ENCODE measurements at regions of chr7 and their contacts with region 1.

Region 1: GRCh38 chr7:103344453-103345149 is at the start of gene DNAJC2:
- DNase-seq: peak; percentile 91
- ATAC-seq: peak; percentile 79
- H3K4me3 Mint-ChIP-seq: peak within 1 kb of the TSS; percentile 92
- H3K27ac Mint-ChIP-seq: peak within 1 kb of the TSS; percentile 99
- H3K4me1 Mint-ChIP-seq: peaks cover 60% of the 10 kb centered on the region
- H3K27me3 Mint-ChIP-seq: no peaks in the 10 kb centered on the region
- total RNA-seq, gene DNAJC2: 50.0 to 56.2 TPM

Region 2: GRCh38 chr7:103074519-103075336 is 269.9 kb before region 1 on chr7 and contains the starts of genes ARMC10 and FBXL13:
- CTCF ChIA-PET with region 1: interaction called, 3 read pairs
- POLR2A ChIA-PET with region 1: no interaction called
- intact Hi-C with region 1: loop called in 1 of 2 experiments (anchors 5 kb)
- DNase-seq: peak; percentile 93
- ATAC-seq: peak; percentile 84
- H3K4me3 Mint-ChIP-seq: peak within 1 kb of the TSS; percentile 91
- H3K27ac Mint-ChIP-seq: peak within 1 kb of the TSS; percentile 93
- H3K4me1 Mint-ChIP-seq: peaks cover 28% of the 10 kb centered on the region
- H3K27me3 Mint-ChIP-seq: no peaks in the 10 kb centered on the region
- total RNA-seq, gene ARMC10: 42.6 to 50.1 TPM
- total RNA-seq, gene FBXL13: 0.32 to 0.83 TPM

Region 3: GRCh38 chr7:103148994-103149807 is 195.4 kb before region 1 on chr7 and contains the start of gene NAPEPLD:
- CTCF ChIA-PET with region 1: no interaction called
- POLR2A ChIA-PET with region 1: no interaction called
- intact Hi-C with region 1: loop called in 1 of 2 experiments (anchors 2 kb)
- DNase-seq: peak; percentile 79
- ATAC-seq: peak; percentile 76
- H3K4me3 Mint-ChIP-seq: peak within 1 kb of the TSS; percentile 93
- H3K27ac Mint-ChIP-seq: peak within 1 kb of the TSS; percentile 100
- H3K4me1 Mint-ChIP-seq: peaks cover 32% of the 10 kb centered on the region
- H3K27me3 Mint-ChIP-seq: peaks cover 1% of the 10 kb centered on the region
- total RNA-seq, gene NAPEPLD: 4.7 TPM

Region 4: GRCh38 chr7:103296901-103297836 is 47.4 kb before region 1 on chr7 and contains the start of gene PMPCB:
- CTCF ChIA-PET with region 1: interaction called, 4 read pairs
- POLR2A ChIA-PET with region 1: no interaction called
- intact Hi-C with region 1: loop called (anchors 1 kb)
- DNase-seq: peak; percentile 98
- ATAC-seq: peak; percentile 98
- H3K4me3 Mint-ChIP-seq: peak within 1 kb of the TSS; percentile 89
- H3K27ac Mint-ChIP-seq: peak within 1 kb of the TSS; percentile 93
- H3K4me1 Mint-ChIP-seq: peaks cover 33% of the 10 kb centered on the region
- H3K27me3 Mint-ChIP-seq: no peaks in the 10 kb centered on the region
- total RNA-seq, gene PMPCB: 70.7 to 86.9 TPM

Region 5: DNA sequence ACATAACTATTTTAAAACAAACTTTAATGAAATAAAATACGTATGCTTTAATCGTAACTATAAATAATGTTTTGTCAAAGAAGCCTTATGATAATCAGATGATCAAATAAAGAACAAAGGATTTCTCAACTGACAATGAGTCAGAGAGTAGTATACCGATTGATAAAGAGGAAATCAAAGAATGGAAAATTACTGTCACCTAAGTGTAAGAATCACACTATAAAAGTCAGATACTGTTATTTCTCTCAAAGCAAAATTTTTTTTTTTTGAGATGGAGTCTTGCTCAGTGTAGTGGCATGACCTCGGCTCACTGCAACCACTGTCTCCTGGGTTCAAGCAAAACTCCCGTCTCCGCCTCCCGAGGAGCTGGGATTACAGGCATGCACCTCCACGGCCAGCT is 18.9 kb before region 1 on chr7:
- CTCF ChIA-PET with region 1: interaction called, 3 read pairs
- POLR2A ChIA-PET with region 1: interaction called, 5 read pairs
- intact Hi-C with region 1: loop called in 1 of 2 experiments (anchors 1 kb)
- DNase-seq: peak; percentile 18
- ATAC-seq: peak; percentile 93
- H3K4me3 Mint-ChIP-seq: no peak overlapping the region
- H3K27ac Mint-ChIP-seq: peak overlapping the region; percentile 86
- H3K4me1 Mint-ChIP-seq: peaks cover 23% of the 10 kb centered on the region
- H3K27me3 Mint-ChIP-seq: no peaks in the 10 kb centered on the region

Region 6: DNA sequence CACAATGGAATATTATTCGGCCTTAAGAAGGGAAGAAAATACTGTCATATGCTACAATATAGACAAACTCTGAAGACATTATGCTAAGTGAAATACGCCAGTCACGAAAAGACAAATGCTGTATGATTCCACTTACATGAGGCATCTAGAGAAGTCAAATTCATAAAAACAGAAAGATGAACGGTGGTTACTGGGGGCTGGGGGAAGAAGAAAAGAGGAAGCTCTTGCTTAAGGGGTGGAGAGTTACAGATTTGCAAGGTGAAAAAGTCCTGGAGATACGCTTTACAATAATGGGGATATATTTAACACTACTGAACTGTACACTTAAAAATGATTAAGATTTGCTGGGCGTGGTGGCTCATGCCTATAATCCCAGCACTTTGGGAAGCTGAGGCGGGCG is 51.9 kb after region 1 on chr7:
- CTCF ChIA-PET with region 1: no interaction called
- POLR2A ChIA-PET with region 1: no interaction called
- intact Hi-C with region 1: loop called in 1 of 2 experiments (anchors 10 kb)
- DNase-seq: no peak
- ATAC-seq: no peak
- H3K4me3 Mint-ChIP-seq: no peak overlapping the region
- H3K27ac Mint-ChIP-seq: no peak overlapping the region
- H3K4me1 Mint-ChIP-seq: no peaks in the 10 kb centered on the region
- H3K27me3 Mint-ChIP-seq: peaks cover 3% of the 10 kb centered on the region

Region 7: GRCh38 chr7:104059103-104059502 is 714.5 kb after region 1 on chr7:
- CTCF ChIA-PET with region 1: no interaction called
- POLR2A ChIA-PET with region 1: no interaction called
- intact Hi-C with region 1: no loop called
- DNase-seq: no peak
- ATAC-seq: no peak
- H3K4me3 Mint-ChIP-seq: no peak overlapping the region
- H3K27ac Mint-ChIP-seq: no peak overlapping the region
- H3K4me1 Mint-ChIP-seq: no peaks in the 10 kb centered on the region
- H3K27me3 Mint-ChIP-seq: peaks cover 3% of the 10 kb centered on the region

Measured in activated CD4-positive, alpha-beta T cell treated with anti-CD3 and anti-CD28 coated beads for 36 hours (primary cell).